ENCODE measurements at regions of chr4 and their contacts with region 1.

Region 1: GRCh38 chr4:110211007-110211769 is 12.8 kb upstream of the ELOVL6 start:
- DNase-seq: no peak
- ATAC-seq: peak; percentile 62

Region 2: DNA sequence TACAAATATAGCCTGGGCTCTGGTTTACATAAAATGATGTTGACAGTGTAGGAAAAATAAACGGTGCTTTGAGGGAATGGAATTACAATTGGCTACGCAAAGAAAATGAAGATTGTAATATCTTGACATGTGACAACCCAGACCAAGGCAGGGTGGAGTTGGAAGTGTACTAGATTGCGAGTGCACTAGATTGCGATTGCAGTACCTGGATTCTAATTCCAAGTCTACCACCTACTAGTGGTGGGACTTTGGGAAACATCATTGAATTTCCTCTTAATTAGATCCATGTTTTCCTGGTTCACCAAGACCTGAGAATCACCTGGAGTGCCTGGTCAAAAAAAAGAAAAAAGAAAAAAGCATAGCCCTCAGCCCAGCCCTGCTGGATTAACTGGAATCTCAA is 279.9 kb before region 1 on chr4:
- intact Hi-C with region 1: no loop called
- DNase-seq: no peak
- ATAC-seq: no peak

Region 3: DNA sequence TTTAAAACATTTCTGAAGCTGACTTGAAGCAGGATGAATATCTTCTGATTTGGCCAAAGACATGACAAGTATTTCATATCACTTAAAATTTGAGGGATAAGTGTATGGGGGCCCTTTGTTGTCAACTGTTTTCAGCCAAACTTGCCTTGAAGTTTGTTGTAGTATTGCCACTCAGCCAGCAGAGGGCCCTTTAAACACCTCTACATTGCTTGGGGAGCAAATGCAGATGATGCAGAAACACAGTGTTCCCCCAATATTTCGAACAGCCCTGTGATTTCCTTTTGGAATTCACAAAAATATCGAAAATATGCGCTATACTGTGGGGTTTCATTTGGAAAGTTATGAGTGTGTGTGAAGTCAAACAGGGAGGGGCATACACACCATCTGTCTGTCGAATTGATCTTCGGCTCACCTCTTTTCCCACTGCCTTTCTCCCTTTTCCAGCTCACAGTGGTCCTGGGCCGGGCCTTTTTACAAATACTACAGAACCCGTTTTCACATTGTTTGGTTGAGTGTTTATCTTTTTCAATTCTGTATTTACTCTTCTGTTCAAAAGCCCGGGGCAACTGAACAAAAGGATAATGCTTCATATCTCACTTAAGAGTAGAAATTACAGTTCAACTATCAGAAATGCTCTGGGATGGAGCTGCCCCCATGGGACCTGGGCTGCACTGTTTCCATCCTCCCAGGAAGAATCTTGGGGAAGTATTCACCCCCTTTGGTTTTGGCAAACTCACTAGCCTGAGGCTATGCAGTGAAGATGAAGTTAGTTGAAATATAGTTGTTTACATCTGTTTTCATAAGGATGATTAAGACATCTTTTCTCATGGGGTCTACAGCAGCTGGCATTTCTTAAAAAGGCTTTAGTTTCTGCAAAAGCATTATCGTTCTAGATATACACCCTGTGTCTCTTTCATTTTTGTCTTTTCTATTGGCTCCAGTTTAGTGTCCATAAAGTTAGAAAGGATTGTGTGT is 160.9 kb before region 1 on chr4:
- intact Hi-C with region 1: loop called (anchors 2 kb)
- DNase-seq: no peak
- ATAC-seq: peak; percentile 36

Region 4: GRCh38 chr4:110163327-110164069 is 47.7 kb before region 1 on chr4:
- intact Hi-C with region 1: no loop called
- DNase-seq: no peak
- ATAC-seq: no peak

Measured in Right ventricle myocardium superior (tissue), 1 donor.